Activated CD4-positive, alpha-beta memory T cell treated with anti-CD3 and anti-CD28 coated beads, Interleukin-2, amount 10 ng/mL, durations not matched to agents 7 days and 5 days (primary cell): ENCODE measurements at regions of chr4 and their contacts with region 1.

Region 1: DNA sequence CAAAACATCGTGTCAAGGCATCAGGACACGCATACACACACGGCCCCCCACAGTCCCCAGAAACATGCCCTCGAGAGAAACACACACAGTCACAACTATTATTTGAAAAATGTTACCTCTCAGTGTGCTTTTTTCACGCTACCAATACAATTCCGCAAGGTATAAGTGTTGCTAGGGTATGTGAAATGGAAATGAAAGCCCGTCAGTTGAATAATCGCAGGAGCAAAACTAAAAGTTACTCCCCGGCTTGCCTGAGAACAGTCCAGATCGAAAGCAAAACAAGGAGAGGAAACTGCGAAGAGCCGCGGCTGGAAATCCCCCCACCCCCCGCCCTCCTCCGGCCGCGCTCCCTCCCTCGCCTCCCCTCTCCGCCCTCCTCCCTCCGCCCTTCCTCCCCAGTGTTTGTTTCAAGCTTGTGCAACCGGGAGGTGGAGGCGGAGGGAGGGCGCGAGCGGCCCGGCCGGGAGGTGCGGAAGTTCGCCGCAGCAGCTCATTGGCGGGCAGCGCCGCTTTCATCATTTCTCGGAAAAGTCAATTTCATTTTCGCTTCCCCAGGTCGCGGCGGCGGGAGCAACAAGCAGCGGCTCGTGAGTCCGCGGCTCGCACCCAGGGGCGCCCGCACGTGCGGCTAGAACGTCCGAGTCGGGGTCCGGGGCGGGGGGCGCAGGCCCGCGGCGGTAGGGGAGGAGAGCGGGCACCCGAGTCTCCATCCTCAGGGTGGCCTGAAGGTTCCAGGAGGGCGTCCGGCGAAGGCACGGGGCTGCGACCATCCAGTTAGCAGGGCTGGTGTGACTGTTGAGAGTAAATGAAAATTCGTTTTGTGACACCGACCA is at the start of gene IRF2:
- DNase-seq: peak; percentile 98
- H3K4me3 Mint-ChIP-seq: peak within 1 kb of the TSS; percentile 91
- H3K27ac Mint-ChIP-seq: peak within 1 kb of the TSS; percentile 96
- H3K4me1 Mint-ChIP-seq: peaks cover 59% of the 10 kb centered on the region
- H3K27me3 Mint-ChIP-seq: no peaks in the 10 kb centered on the region
- total RNA-seq, gene IRF2: 77.2 to 78.5 TPM

Region 2: GRCh38 chr4:184417802-184418511 is 56.5 kb before region 1 on chr4:
- CTCF ChIA-PET with region 1: interaction called, 4 read pairs
- POLR2A ChIA-PET with region 1: interaction called, 50 read pairs
- DNase-seq: peak; percentile 36
- H3K4me3 Mint-ChIP-seq: peak overlapping the region; percentile 77
- H3K27ac Mint-ChIP-seq: peak overlapping the region; percentile 98
- H3K4me1 Mint-ChIP-seq: peaks cover 92% of the 10 kb centered on the region
- H3K27me3 Mint-ChIP-seq: no peaks in the 10 kb centered on the region

Region 3: GRCh38 chr4:184459413-184459812 is 15.1 kb before region 1 on chr4:
- CTCF ChIA-PET with region 1: no interaction called
- POLR2A ChIA-PET with region 1: interaction called, 14 read pairs
- DNase-seq: no peak
- H3K4me3 Mint-ChIP-seq: no peak overlapping the region
- H3K27ac Mint-ChIP-seq: peak overlapping the region; percentile 40
- H3K4me1 Mint-ChIP-seq: peaks cover 62% of the 10 kb centered on the region
- H3K27me3 Mint-ChIP-seq: no peaks in the 10 kb centered on the region

Region 4: DNA sequence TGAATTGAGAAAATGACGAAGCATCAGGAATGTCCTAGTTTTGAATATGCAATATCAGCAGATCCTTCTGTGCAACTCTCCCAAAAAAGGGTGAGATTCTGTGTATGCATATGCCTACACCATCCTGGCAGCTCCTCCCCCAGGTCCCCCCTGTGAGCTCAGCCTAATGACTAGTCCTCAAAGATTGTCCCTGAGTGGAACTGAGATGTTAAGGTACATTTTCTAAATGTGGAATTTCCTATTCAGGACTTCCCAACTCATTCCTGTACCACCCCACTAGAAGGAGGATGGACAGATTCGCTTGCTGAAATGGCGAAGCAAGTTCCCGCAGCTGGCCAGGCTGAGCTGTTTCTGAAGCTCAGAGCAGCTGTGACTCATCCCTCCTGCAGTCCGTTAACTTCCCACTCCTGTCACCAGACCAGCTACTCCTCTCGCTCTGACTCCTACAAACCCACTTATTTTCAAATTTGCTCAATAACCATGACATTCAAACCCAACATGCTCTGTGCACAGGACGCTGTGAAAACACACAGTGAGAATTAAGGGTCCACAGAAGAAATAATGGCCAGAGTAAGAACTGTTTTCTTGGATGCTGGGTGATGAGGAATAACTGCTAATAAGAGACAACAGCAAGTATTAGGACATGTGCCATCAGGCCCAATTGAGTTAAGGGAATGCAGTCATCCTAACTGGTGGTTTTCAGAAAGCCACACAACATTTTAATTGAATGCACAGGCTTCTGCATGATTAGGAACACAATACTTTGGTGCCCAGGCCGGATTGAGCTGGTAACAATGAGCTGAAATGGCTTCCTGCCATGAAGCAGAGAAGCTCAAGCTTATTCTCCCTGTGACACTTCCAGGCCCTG is 39.9 kb after region 1 on chr4:
- CTCF ChIA-PET with region 1: interaction called, 5 read pairs
- POLR2A ChIA-PET with region 1: interaction called, 94 read pairs
- DNase-seq: peak; percentile 71
- H3K4me3 Mint-ChIP-seq: peak overlapping the region; percentile 32
- H3K27ac Mint-ChIP-seq: peak overlapping the region; percentile 89
- H3K4me1 Mint-ChIP-seq: peaks cover 47% of the 10 kb centered on the region
- H3K27me3 Mint-ChIP-seq: no peaks in the 10 kb centered on the region

Region 5: DNA sequence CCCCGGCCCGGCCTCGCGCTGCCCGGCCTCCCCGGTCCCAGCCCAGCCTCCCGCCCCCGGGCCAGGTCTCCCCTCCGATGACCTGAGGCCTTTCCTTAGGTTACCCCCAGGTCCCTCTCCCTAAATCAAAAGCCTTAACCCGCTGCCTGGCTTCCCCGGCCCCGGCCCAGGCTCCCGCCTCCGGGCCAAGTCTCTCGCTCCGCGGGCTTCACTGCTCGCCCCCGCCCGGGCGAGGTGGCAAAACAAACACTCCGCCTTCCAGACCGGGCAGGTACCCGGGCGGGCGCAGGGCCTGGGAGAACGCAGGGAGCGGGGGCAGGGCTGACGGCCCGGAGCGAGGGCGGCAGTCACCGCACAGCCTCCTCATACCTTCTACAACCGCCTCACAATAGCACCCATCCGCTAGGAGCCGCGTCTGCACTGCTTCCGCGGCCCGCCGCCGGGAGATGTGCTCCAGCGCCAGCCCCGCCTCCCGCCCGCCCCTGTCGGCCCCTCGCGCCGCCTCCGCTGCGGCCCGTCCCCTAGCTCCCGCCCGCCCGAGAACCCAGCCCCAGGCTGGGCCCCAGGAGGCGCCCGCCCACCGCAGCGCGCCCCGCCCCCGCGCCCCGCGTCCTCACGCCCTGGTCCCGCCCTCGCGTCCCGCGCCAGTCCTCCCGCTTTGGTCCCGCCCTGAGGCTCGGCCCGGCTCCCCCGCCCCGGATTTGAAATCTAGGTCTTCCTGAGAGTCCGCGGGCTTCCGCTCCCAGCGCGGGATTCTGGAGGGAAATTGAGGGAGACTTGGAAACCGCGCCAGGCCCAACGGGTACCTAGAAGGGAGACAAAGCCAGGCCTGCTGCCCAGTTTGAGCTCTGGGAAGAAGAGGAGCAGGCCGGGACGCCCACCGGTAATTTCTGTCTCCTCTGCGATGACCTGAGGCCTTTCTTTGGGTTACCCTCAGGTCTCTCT is 174.8 kb after region 1 on chr4 and contains the starts of genes CASP3 and PRIMPOL:
- CTCF ChIA-PET with region 1: interaction called, 5 read pairs
- POLR2A ChIA-PET with region 1: interaction called, 48 read pairs
- DNase-seq: peak; percentile 97
- H3K4me3 Mint-ChIP-seq: peak within 1 kb of the TSS; percentile 91
- H3K27ac Mint-ChIP-seq: peak within 1 kb of the TSS; percentile 89
- H3K4me1 Mint-ChIP-seq: peaks cover 63% of the 10 kb centered on the region
- H3K27me3 Mint-ChIP-seq: no peaks in the 10 kb centered on the region
- total RNA-seq, gene CASP3: 71.4 to 77.1 TPM
- total RNA-seq, gene PRIMPOL: 19.2 to 23.4 TPM